ENCODE measurements at regions of chr17 and their contacts with region 1.

Region 1: GRCh38 chr17:49707608-49708514 is at the start of gene SLC35B1:
- DNase-seq: peak; percentile 97
- ATAC-seq: peak; percentile 98
- H3K4me3 ChIP-seq: peak within 1 kb of the TSS; percentile 91
- H3K27ac ChIP-seq: peak within 1 kb of the TSS; percentile 98
- H3K4me1 ChIP-seq: 0 out of 2 replicates have a peak, but pooled peaks cover 3% of the 10 kb centered on the region
- H3K27me3 ChIP-seq: no peaks in the 10 kb centered on the region
- CTCF ChIP-seq: peak; percentile 97 to 99 (median 98); a peak in 5 of 6 replicates
- EP300 ChIP-seq: 0 out of 4 replicates have a peak, but pooled peaks of 1 of the 2 experiments have one; percentile 10
- POLR2A ChIP-seq: peak; percentile 93
- RAD21 ChIP-seq: peak; percentile 70
- polyA plus RNA-seq, gene SLC35B1: 40.0 to 44.4 TPM

Region 2: DNA sequence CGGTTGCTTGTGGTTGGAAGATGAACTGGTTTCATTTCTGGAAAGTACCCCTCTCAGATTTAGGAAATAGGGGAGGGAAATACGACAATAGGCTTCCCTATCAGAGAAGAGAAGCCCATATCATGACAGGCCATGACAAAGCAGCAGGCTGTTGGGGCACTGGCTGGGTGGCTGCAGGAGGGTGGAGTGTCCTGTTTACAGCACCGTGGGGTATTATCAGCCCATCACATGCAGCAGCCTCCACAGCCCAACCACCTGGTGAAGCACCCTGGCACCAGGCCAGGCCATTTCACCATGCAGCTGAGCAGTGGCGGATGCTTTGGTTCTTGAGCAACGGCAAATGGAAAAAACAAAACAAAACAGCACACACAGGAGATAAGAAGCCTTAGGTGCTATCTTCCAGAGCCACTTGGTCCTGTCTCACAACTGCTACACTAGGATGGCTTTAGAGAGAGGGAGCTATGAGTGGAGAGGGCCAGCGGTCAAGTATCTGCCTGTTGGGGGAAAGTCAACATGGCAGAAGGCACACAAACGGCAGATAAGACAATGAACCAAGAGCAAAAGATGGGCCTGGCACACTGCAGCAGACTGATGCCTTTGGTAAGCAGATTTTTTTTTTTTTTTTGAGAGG is 31.9 kb after region 1 on chr17:
- CTCF ChIA-PET with region 1: interaction called, 46 read pairs
- POLR2A ChIA-PET with region 1: interaction called, 8 read pairs
- RAD21 ChIA-PET with region 1: interaction called, 6 read pairs
- SMC1A ChIA-PET with region 1: interaction called, 27 read pairs
- in situ Hi-C with region 1: no loop called
- intact Hi-C with region 1: loop called (anchors 2 kb)
- DNase-seq: no peak
- ATAC-seq: peak; percentile 77
- H3K4me3 ChIP-seq: peak overlapping the region; percentile 31; the same call in 1 of the 2 replicates
- H3K27ac ChIP-seq: peak overlapping the region; percentile 79
- H3K4me1 ChIP-seq: peaks cover 44% of the 10 kb centered on the region
- H3K27me3 ChIP-seq: no peaks in the 10 kb centered on the region
- CTCF ChIP-seq: no peak
- EP300 ChIP-seq: 0 out of 4 replicates have a peak, but pooled peaks of 1 of the 2 experiments have one; percentile 13
- POLR2A ChIP-seq: peak; percentile 45; the same call in 1 of the 2 replicates
- RAD21 ChIP-seq: no peak

Region 3: GRCh38 chr17:49763735-49764558 is 56.1 kb after region 1 on chr17 and contains the start of gene FAM117A:
- CTCF ChIA-PET with region 1: interaction called, 30 read pairs
- POLR2A ChIA-PET with region 1: interaction called, 12 read pairs
- RAD21 ChIA-PET with region 1: interaction called, 19 read pairs
- SMC1A ChIA-PET with region 1: interaction called, 18 read pairs
- in situ Hi-C with region 1: no loop called
- intact Hi-C with region 1: loop called (anchors 5 kb)
- DNase-seq: peak; percentile 99
- ATAC-seq: peak; percentile 98
- H3K4me3 ChIP-seq: peak within 1 kb of the TSS; percentile 86
- H3K27ac ChIP-seq: no peak within 1 kb of the TSS
- H3K4me1 ChIP-seq: peaks cover 18% of the 10 kb centered on the region
- H3K27me3 ChIP-seq: 0 out of 4 replicates have a peak, but pooled peaks cover 0 to 1% of the 10 kb centered on the region in 2 experiments
- CTCF ChIP-seq: no peak
- EP300 ChIP-seq: no peak
- POLR2A ChIP-seq: peak; percentile 97
- RAD21 ChIP-seq: no peak
- polyA plus RNA-seq, gene FAM117A: 2.1 to 3.3 TPM

Region 4: GRCh38 chr17:49788478-49789242 is 80.8 kb after region 1 on chr17 and contains the start of gene KAT7:
- CTCF ChIA-PET with region 1: interaction called, 34 read pairs
- POLR2A ChIA-PET with region 1: interaction called, 7 read pairs
- RAD21 ChIA-PET with region 1: interaction called, 13 read pairs
- SMC1A ChIA-PET with region 1: interaction called, 25 read pairs
- in situ Hi-C with region 1: loop called (anchors 5 kb)
- intact Hi-C with region 1: loop called (anchors 1 kb)
- DNase-seq: peak; percentile 99
- ATAC-seq: peak; percentile 96
- H3K4me3 ChIP-seq: peak within 1 kb of the TSS; percentile 91
- H3K27ac ChIP-seq: peak within 1 kb of the TSS; percentile 99
- H3K4me1 ChIP-seq: peaks cover 6% of the 10 kb centered on the region
- H3K27me3 ChIP-seq: no peaks in the 10 kb centered on the region
- CTCF ChIP-seq: peak in 1 of 3 experiments; percentile 7; a peak in 1 of 6 replicates
- EP300 ChIP-seq: peak; percentile 37 to 48; a peak in 1 of 4 replicates
- POLR2A ChIP-seq: peak; percentile 89
- RAD21 ChIP-seq: no peak
- polyA plus RNA-seq, gene KAT7: 6.6 to 8.7 TPM

Region 5: GRCh38 chr17:49910094-49910857 is 202.4 kb after region 1 on chr17:
- CTCF ChIA-PET with region 1: no interaction called
- POLR2A ChIA-PET with region 1: no interaction called
- RAD21 ChIA-PET with region 1: no interaction called
- SMC1A ChIA-PET with region 1: no interaction called
- in situ Hi-C with region 1: no loop called
- intact Hi-C with region 1: no loop called
- DNase-seq: no peak
- ATAC-seq: no peak
- H3K4me3 ChIP-seq: no peak overlapping the region
- H3K27ac ChIP-seq: no peak overlapping the region
- H3K4me1 ChIP-seq: no peaks in the 10 kb centered on the region
- H3K27me3 ChIP-seq: peaks cover 12 to 23% of the 10 kb centered on the region in 2 experiments
- CTCF ChIP-seq: no peak
- EP300 ChIP-seq: no peak
- POLR2A ChIP-seq: no peak
- RAD21 ChIP-seq: no peak